MCF 10A (cell line): ENCODE measurements at regions of chr12 and their contacts with region 1.

Region 1: DNA sequence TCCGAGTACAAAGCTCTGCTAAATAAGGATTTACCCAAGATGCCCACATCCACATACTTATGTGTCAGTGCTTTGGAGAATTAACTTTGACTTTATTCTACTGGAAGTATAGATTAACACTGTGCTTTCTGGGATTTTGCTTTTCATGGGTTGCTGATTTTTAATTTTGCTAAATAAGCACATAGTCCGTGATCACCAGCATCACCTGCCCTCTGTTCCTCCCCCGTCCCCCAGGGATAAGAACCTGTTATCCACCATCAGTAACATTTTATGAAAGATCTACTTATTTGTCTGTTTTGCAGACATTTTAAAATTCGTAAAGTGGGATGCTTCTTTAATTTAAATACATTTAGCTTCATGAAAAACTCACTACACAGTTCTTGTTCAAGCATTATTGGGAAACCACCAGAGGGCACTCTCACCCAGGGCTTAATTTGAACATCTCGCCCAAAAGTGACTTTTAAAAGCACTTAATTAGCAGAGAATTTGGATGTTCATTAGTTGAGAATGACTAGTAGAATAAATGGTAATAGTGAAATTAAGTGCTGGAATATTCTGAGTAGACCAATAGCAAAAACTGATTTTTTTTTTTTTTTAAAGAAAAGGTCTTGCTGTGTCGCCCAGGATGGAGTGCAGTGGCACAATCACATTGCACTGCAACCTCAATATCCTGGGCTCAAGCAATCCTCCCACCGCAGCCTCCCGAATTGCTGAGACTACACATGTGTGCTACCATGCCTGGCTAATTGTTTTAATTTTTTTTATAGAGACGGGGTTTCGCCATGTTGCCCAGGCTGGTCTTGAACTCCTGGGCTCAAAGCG is 35.7 kb downstream of the MRPL42 start:
- DNase-seq: peak; percentile 54
- H3K4me3 Mint-ChIP-seq: no peak overlapping the region
- H3K27ac Mint-ChIP-seq: no peak overlapping the region
- H3K4me1 Mint-ChIP-seq: no peaks in the 10 kb centered on the region
- H3K27me3 Mint-ChIP-seq: no peaks in the 10 kb centered on the region
- CTCF ChIP-seq: peak; percentile 81

Region 2: DNA sequence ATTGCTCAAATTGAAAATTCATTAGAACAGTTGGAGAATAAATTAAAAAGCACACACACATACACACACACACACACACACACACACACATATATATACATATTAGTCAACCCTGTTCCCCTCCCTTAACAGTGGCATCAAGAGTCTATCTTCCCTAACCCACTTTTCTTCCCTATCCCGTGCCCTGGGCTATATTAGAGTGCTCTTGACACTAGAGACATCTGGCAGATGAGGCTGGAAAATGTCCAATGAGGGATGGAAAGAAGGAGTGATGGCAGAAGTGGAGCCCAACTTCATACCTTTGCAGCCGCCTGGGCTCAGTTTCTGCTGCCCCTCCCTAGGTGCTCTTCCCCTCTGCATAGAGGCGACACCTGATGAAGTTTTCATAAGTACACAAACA is 297.7 kb before region 1 on chr12:
- CTCF ChIA-PET with region 1: no interaction called
- POLR2A ChIA-PET with region 1: no interaction called
- intact Hi-C with region 1: no loop called
- DNase-seq: no peak
- H3K4me3 Mint-ChIP-seq: no peak overlapping the region
- H3K27ac Mint-ChIP-seq: no peak overlapping the region
- H3K4me1 Mint-ChIP-seq: peaks cover 9% of the 10 kb centered on the region
- H3K27me3 Mint-ChIP-seq: no peaks in the 10 kb centered on the region
- CTCF ChIP-seq: no peak

Region 3: GRCh38 chr12:93514853-93515252 is 11.8 kb after region 1 on chr12:
- CTCF ChIA-PET with region 1: interaction called, 27 read pairs
- POLR2A ChIA-PET with region 1: interaction called, 5 read pairs
- intact Hi-C with region 1: no loop called
- DNase-seq: peak; percentile 36
- H3K4me3 Mint-ChIP-seq: no peak overlapping the region
- H3K27ac Mint-ChIP-seq: no peak overlapping the region
- H3K4me1 Mint-ChIP-seq: peaks cover 9% of the 10 kb centered on the region
- H3K27me3 Mint-ChIP-seq: no peaks in the 10 kb centered on the region
- CTCF ChIP-seq: no peak

Region 4: DNA sequence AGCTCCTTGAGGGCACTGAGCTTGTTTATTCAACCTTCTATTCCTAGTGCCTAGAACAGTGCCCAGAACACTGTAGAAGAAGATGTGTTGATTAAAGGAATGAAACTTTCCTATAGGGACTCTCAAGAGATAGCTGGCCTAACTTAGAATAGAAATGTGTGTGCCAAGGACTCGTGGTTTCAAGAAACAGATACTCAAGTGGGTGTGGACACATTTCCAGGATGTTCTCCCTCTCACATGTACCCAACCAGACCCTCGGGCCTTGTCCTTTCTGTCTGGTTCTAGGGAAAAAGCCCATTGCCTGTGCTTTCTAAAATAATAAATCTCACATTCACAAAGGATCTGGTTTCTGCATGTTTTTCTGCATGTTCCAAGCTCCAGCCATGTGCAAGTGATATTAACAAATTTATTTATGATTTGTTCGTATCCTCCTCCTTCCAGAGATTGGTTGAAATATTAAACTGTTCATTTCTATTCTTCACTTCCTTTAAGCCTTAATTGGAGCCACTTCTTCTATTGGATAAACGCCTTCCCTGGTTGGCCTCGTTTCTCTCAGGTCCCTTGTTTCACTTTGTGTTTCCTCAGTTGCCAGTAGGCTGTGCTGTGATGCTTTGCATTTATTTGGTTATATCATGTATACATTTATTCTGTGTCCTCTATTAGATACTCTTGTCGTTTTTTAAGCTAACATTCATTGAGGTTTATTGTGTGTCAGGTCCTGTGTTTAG is 263.9 kb after region 1 on chr12:
- CTCF ChIA-PET with region 1: interaction called, 41 read pairs
- POLR2A ChIA-PET with region 1: interaction called, 4 read pairs
- intact Hi-C with region 1: loop called (anchors 2 kb)
- DNase-seq: peak; percentile 77
- H3K4me3 Mint-ChIP-seq: no peak overlapping the region
- H3K27ac Mint-ChIP-seq: no peak overlapping the region
- H3K4me1 Mint-ChIP-seq: peaks cover 26% of the 10 kb centered on the region
- H3K27me3 Mint-ChIP-seq: no peaks in the 10 kb centered on the region
- CTCF ChIP-seq: peak; percentile 57

Region 5: DNA sequence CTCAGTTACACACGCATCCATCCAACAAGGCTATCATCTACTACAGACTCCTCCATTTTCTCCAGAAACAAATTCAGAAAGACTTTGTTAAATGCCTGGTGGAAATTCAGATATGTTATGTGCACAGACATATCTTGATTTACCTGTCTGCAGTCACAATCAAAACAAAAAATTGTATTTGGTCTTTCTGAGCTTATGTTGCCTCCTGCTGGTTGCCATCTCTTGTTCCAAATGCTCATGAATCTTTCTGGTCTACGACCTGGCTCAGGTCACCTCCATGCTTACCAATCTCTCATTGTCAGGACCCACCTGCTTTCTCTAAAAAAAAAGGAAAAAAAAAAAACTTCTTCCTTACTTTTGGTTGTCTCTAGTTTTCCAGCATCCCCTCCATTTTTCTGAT is 476.2 kb after region 1 on chr12:
- CTCF ChIA-PET with region 1: interaction called, 4 read pairs
- POLR2A ChIA-PET with region 1: no interaction called
- intact Hi-C with region 1: loop called (anchors 10 kb)
- DNase-seq: peak; percentile 56
- H3K4me3 Mint-ChIP-seq: no peak overlapping the region
- H3K27ac Mint-ChIP-seq: peak overlapping the region; percentile 75
- H3K4me1 Mint-ChIP-seq: peaks cover 39% of the 10 kb centered on the region
- H3K27me3 Mint-ChIP-seq: no peaks in the 10 kb centered on the region
- CTCF ChIP-seq: peak; percentile 36